Naive thymus-derived CD4-positive, alpha-beta T cell (primary cell): ENCODE measurements at regions of chr3 and their contacts with region 1.

Region 1: GRCh38 chr3:141452036-141452435 is 34.8 kb upstream of the RASA2 start:
- DNase-seq: peak in 7 of 9 donors; percentile 45 to 78 (median 64)
- ATAC-seq: peak; percentile 90
- H3K4me3 ChIP-seq: no peak overlapping the region
- H3K4me3 Mint-ChIP-seq: no peak overlapping the region
- H3K27ac ChIP-seq: peak overlapping the region; percentile 10
- H3K27ac Mint-ChIP-seq: no peak overlapping the region
- H3K4me1 ChIP-seq: peaks cover 0 to 10% of the 10 kb centered on the region in 2 donors
- H3K4me1 Mint-ChIP-seq: peaks cover 6 to 20% (median 12%) of the 10 kb centered on the region in 7 donors
- H3K27me3 ChIP-seq: no peaks in the 10 kb centered on the region
- H3K27me3 Mint-ChIP-seq: no peaks in the 10 kb centered on the region

Region 2: GRCh38 chr3:139846729-139847128 is 1605.3 kb before region 1 on chr3:
- CTCF ChIA-PET with region 1: no interaction called
- POLR2A ChIA-PET with region 1: no interaction called
- intact Hi-C with region 1: no loop called
- DNase-seq: no peak
- ATAC-seq: no peak
- H3K4me3 ChIP-seq: no peak overlapping the region
- H3K4me3 Mint-ChIP-seq: no peak overlapping the region
- H3K27ac ChIP-seq: no peak overlapping the region
- H3K27ac Mint-ChIP-seq: no peak overlapping the region
- H3K4me1 ChIP-seq: no peaks in the 10 kb centered on the region
- H3K4me1 Mint-ChIP-seq: no peaks in the 10 kb centered on the region
- H3K27me3 ChIP-seq: no peaks in the 10 kb centered on the region
- H3K27me3 Mint-ChIP-seq: peaks cover 0 to 6% (median 0%) of the 10 kb centered on the region in 5 donors

Region 3: GRCh38 chr3:140898340-140899180 is 553.5 kb before region 1 on chr3:
- CTCF ChIA-PET with region 1: no interaction called
- POLR2A ChIA-PET with region 1: no interaction called
- intact Hi-C with region 1: loop called in 1 of 2 experiments (anchors 5 kb)
- DNase-seq: peak in 7 of 9 donors; percentile 12 to 60 (median 38)
- ATAC-seq: peak; percentile 83
- H3K4me3 ChIP-seq: no peak overlapping the region
- H3K4me3 Mint-ChIP-seq: no peak overlapping the region
- H3K27ac ChIP-seq: no peak overlapping the region
- H3K27ac Mint-ChIP-seq: no peak overlapping the region
- H3K4me1 ChIP-seq: no peaks in the 10 kb centered on the region
- H3K4me1 Mint-ChIP-seq: peaks cover 0 to 2% (median 0%) of the 10 kb centered on the region in 7 donors
- H3K27me3 ChIP-seq: no peaks in the 10 kb centered on the region
- H3K27me3 Mint-ChIP-seq: peaks cover 22 to 35% (median 25%) of the 10 kb centered on the region in 5 donors

Region 4: GRCh38 chr3:141011232-141011996 is 440.6 kb before region 1 on chr3:
- CTCF ChIA-PET with region 1: no interaction called
- POLR2A ChIA-PET with region 1: no interaction called
- intact Hi-C with region 1: loop called in 1 of 2 experiments (anchors 2 kb)
- DNase-seq: peak; percentile 40 to 74 (median 64)
- ATAC-seq: peak; percentile 98
- H3K4me3 ChIP-seq: no peak overlapping the region
- H3K4me3 Mint-ChIP-seq: no peak overlapping the region
- H3K27ac ChIP-seq: no peak overlapping the region
- H3K27ac Mint-ChIP-seq: no peak overlapping the region
- H3K4me1 ChIP-seq: peaks cover 0 to 3% of the 10 kb centered on the region in 2 donors
- H3K4me1 Mint-ChIP-seq: peaks cover 0 to 7% (median 5%) of the 10 kb centered on the region in 7 donors
- H3K27me3 ChIP-seq: peaks cover 0 to 4% of the 10 kb centered on the region in 2 donors
- H3K27me3 Mint-ChIP-seq: peaks cover 16 to 52% (median 25%) of the 10 kb centered on the region in 5 donors

Region 5: DNA sequence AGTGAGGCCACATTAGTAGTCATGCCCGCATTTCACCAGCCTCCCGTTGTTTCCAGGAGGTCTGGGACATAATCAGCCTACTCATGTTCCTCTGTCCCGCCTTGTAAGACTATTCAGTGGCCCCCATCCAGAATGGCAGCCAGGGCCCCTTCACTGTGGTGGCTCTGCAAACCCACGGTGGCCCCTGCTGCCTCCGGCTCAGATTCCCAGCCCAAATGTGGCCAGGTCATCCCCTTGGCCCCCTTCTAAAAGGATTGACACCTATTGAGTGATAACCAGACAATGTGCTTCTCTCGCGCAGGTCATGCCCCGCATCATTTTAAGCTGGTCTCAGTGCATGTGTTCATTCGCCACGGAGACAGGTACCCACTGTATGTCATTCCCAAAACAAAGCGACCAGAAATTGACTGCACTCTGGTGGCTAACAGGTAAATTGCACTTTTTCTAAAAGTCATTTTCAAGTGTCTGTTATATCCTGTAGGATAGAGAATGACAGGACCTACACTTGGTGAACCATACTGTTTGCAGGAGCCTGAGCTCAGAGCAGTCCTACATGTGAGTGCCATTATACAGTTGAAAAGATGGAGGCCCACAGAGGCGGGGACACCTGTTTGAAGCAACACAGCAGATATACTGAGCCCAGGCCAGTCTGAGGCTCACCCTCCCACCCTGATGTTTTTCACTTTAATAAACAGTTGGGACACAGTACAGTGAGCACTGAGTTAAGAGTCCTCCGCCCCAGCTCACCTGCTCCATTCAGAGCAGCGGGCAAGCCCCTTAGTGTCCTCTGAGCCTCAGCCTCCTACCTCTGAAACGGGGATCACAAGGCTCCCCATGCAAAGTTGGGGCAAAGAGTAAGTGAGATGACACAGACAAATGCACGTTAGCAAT is 172.7 kb before region 1 on chr3:
- CTCF ChIA-PET with region 1: no interaction called
- POLR2A ChIA-PET with region 1: interaction called, 3 read pairs
- intact Hi-C with region 1: loop called in 1 of 2 experiments (anchors 1 kb)
- DNase-seq: peak in 7 of 9 donors; percentile 23 to 58 (median 46)
- ATAC-seq: peak; percentile 82
- H3K4me3 ChIP-seq: no peak overlapping the region
- H3K4me3 Mint-ChIP-seq: peak overlapping the region in 1 of 10 donors; percentile 17
- H3K27ac ChIP-seq: no peak overlapping the region
- H3K27ac Mint-ChIP-seq: peak overlapping the region in 6 of 9 donors; percentile 1 to 83 (median 44)
- H3K4me1 ChIP-seq: peaks cover 10 to 19% of the 10 kb centered on the region in 2 donors
- H3K4me1 Mint-ChIP-seq: peaks cover 14 to 36% (median 21%) of the 10 kb centered on the region in 7 donors
- H3K27me3 ChIP-seq: no peaks in the 10 kb centered on the region
- H3K27me3 Mint-ChIP-seq: no peaks in the 10 kb centered on the region

Region 6: DNA sequence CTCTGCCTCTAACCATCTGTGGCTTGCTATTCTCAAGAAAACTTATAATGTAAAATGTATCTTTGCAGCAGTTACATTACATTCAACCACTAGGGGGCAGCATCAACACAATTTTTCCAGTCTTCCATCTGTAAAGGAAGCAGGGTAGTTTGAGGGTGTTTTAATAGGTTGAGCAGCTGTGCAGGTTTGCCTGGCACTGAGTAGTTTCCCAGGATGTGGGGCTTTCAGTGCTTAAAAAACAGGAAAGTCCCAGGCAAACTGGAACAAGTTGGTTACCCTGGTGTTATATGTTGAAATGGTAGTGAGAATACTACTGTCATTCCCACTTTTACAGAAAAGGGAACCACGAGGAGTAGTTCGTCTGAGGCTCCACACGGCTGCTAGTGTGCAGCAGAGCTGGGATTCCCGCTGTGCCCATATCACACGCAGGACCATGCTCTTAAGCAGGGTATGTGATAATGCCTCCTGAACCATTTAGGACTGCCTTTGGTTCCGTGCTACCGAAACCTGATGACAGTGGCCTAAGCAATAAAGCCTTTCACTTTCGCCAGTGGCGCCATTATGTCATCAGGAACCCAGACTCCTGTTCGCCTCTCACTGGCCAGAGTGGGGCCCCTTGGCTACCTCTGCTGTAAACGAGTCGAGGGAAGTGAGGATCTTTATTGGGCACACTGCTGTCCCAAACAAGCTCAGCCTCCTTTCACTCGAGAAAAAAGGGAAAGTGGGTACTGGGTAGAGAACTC is 148.4 kb before region 1 on chr3:
- CTCF ChIA-PET with region 1: interaction called, 161 read pairs
- POLR2A ChIA-PET with region 1: interaction called, 17 read pairs
- intact Hi-C with region 1: loop called (anchors 1 kb)
- DNase-seq: peak in 7 of 9 donors; percentile 62 to 84 (median 77)
- ATAC-seq: peak; percentile 77
- H3K4me3 ChIP-seq: no peak overlapping the region
- H3K4me3 Mint-ChIP-seq: peak overlapping the region in 1 of 10 donors; percentile 3
- H3K27ac ChIP-seq: no peak overlapping the region
- H3K27ac Mint-ChIP-seq: peak overlapping the region in 5 of 9 donors; percentile 4 to 84 (median 50)
- H3K4me1 ChIP-seq: peaks cover 20 to 57% of the 10 kb centered on the region in 2 donors
- H3K4me1 Mint-ChIP-seq: peaks cover 30 to 90% (median 80%) of the 10 kb centered on the region in 7 donors
- H3K27me3 ChIP-seq: no peaks in the 10 kb centered on the region
- H3K27me3 Mint-ChIP-seq: peaks cover 0 to 5% (median 0%) of the 10 kb centered on the region in 5 donors

Region 7: GRCh38 chr3:141360888-141361598 is 91.0 kb before region 1 on chr3:
- CTCF ChIA-PET with region 1: interaction called, 66 read pairs
- POLR2A ChIA-PET with region 1: interaction called, 5 read pairs
- intact Hi-C with region 1: loop called (anchors 1 kb)
- DNase-seq: peak in 7 of 9 donors; percentile 20 to 56 (median 45)
- ATAC-seq: peak; percentile 83
- H3K4me3 ChIP-seq: no peak overlapping the region
- H3K4me3 Mint-ChIP-seq: peak overlapping the region in 4 of 10 donors; percentile 16 to 40 (median 28)
- H3K27ac ChIP-seq: no peak overlapping the region
- H3K27ac Mint-ChIP-seq: peak overlapping the region in 2 of 9 donors; percentile 26 to 51
- H3K4me1 ChIP-seq: no peaks in the 10 kb centered on the region
- H3K4me1 Mint-ChIP-seq: peaks cover 5 to 9% (median 7%) of the 10 kb centered on the region in 7 donors
- H3K27me3 ChIP-seq: no peaks in the 10 kb centered on the region
- H3K27me3 Mint-ChIP-seq: peaks cover 0 to 11% (median 0%) of the 10 kb centered on the region in 5 donors

Region 8: DNA sequence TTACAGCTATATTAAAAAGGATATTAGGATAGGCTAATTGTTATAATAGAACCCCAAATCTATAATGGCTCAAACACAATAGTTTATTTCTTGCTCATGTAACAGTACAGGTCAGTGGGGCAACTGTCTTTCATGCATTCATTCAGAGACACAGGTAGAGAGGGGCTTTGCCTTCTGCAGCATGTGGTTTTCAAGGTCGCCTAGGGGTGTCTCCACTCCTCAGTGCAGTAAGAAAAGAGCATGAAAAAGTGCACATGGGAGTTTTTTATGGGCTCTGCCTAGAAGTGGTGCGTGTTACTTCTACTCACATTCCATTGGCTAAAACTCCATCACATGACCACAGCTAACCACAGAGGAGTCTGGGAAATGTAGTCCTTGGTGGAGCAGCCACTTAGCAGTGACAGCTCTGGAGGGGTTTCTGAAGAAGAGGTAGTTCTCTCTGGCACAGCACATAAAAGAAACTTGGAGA is 81.9 kb before region 1 on chr3:
- CTCF ChIA-PET with region 1: interaction called, 17 read pairs
- POLR2A ChIA-PET with region 1: interaction called, 3 read pairs
- intact Hi-C with region 1: loop called in 1 of 2 experiments (anchors 1 kb)
- DNase-seq: peak; percentile 17 to 90 (median 81)
- ATAC-seq: peak; percentile 99
- H3K4me3 ChIP-seq: no peak overlapping the region
- H3K4me3 Mint-ChIP-seq: no peak overlapping the region
- H3K27ac ChIP-seq: no peak overlapping the region
- H3K27ac Mint-ChIP-seq: peak overlapping the region in 6 of 9 donors; percentile 13 to 76 (median 46)
- H3K4me1 ChIP-seq: no peaks in the 10 kb centered on the region
- H3K4me1 Mint-ChIP-seq: peaks cover 4 to 17% (median 7%) of the 10 kb centered on the region in 7 donors
- H3K27me3 ChIP-seq: no peaks in the 10 kb centered on the region
- H3K27me3 Mint-ChIP-seq: peaks cover 0 to 3% (median 0%) of the 10 kb centered on the region in 5 donors